Posterior cingulate gyrus (tissue), 11 donors: ENCODE measurements at regions of chr21 and their contacts with region 1.

Region 1: GRCh38 chr21:45080639-45081414 is 6.4 kb downstream of the ADARB1 start:
- DNase-seq: no peak

Region 2: DNA sequence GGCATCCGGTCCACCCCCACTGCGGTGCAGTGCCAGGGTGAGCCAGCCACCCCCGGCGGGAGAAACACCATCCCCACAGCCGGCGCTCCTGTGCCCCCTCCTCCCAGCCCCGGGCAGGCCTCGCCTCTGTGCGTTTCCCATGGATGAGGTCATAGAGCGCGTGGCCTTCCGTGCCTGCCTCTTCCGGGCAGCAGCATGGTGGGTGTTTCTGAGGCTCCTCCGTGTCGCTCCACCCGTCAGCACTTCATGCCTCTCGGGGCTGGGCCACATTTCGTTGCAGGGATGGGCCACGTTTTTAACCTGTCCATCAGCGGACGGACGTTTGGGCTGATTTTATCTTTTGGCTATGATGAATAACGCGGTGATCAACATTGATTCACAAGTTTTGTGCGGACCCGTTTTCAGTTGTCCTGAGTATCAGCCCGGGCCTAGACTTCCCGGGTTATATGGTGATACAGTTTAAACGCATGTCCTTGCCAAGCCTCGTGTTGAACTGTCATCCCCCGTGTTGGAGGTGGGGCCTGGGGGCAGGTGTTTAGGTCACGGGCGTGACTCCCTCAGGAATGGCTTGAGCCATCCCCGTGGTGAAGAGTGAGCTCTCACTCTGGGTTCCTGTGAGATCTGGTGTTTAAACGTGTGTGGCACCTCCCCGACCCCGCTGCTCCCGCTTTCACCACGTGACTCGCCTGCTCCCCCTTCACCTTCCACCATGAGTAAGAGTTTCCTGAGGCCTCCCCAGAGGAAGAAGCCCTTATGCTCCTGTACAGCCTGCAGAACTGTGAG is 76.2 kb before region 1 on chr21:
- intact Hi-C with region 1: no loop called
- DNase-seq: peak in 5 of 10 donors; percentile 5 to 63 (median 47)

Region 3: DNA sequence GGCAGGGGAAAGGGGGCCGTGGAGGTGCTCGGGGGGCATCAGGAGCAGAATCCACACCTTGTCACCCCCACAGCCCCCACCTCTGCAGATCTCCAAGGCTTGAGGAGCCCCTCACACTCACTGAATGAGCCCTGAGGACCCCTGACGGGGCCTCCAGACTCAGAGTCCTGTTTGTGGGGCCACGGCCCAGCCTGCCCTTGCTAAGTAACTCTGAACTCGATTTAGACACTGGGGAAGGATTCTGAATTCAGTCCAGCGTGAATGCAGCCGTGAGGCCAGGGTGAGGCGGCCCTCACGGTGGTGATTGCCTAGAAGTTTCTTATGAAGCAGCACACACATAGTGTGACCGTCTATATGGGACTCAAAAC is 65.4 kb before region 1 on chr21:
- intact Hi-C with region 1: loop called (anchors 2 kb)
- DNase-seq: peak in 3 of 10 donors; percentile 26 to 55 (median 55)

Region 4: GRCh38 chr21:45256912-45257672 is 176.3 kb after region 1 on chr21:
- intact Hi-C with region 1: no loop called
- DNase-seq: peak in 2 of 10 donors; percentile 59 to 75